MCF 10A (cell line): ENCODE measurements at regions of chr19 and their contacts with region 1.

Region 1: DNA sequence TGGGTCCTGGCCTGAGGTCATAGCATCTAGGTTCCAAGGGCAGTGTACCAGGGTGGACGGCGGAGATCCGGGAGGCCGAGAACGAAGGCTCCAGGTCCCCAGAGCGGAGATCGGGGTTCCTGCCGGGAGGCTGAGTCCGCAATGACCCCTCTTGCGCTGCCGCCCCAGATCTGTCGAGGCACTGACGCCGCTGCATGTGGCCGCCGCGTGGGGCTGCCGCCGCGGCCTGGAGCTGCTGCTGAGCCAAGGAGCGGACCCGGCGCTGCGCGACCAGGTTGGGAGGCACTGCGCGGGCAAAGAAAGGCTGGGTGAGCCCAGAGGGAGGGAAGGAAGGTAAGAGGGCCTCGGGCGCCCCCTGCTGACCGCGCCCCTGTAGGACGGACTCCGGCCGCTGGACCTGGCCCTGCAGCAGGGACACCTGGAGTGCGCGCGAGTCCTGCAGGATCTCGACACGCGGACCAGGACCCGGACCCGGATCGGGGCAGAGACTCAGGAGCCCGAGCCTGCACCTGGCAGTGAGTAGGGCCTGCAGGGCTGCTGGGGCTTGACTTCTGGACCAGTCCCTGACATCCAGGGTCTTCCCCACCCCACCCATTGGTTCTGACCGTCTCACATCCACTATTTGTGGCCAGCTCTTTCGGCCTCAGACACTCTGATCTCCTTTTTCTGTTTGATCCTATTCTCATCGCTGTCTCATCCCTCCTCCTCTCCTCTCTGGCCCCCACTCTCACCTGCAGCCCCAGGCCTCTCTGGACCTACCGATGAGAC is 971 bp downstream of the ANKLE1 start:
- DNase-seq: peak; percentile 88
- H3K4me3 Mint-ChIP-seq: peak overlapping the region; percentile 61
- H3K27ac Mint-ChIP-seq: no peak overlapping the region
- H3K4me1 Mint-ChIP-seq: no peaks in the 10 kb centered on the region
- H3K27me3 Mint-ChIP-seq: no peaks in the 10 kb centered on the region
- CTCF ChIP-seq: peak; percentile 88

Region 2: DNA sequence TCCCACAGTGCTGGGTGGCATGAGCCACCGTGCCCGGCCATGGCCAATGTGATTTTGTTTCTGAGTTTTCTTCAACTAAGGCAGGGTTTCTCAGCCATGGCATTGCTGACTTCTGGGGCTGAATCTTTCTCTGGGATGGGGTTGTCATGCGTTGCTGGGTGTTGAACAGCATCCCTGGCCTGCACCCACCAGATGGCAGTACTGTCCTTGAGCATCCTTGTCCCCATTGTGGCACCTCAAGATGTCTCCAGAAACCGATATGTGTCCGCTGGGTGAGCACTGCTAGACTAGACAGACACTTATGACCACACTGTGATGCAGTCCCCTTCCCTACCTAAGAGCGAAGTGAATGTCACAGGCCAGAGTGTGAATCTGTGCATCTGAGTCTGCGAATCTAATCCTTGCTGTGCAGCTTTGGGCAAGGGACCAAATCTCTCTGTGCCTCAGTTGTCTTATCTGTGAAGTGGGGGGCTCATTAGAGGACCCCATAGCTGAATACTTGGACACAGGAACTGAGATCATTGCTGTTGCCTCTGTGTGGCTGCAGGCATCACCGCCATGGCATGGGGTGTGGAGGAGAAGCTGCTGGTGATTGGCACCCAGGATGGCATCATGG is 503.8 kb before region 1 on chr19:
- CTCF ChIA-PET with region 1: no interaction called
- POLR2A ChIA-PET with region 1: no interaction called
- intact Hi-C with region 1: loop called (anchors 5 kb)
- DNase-seq: peak; percentile 78
- H3K4me3 Mint-ChIP-seq: no peak overlapping the region
- H3K27ac Mint-ChIP-seq: no peak overlapping the region
- H3K4me1 Mint-ChIP-seq: no peaks in the 10 kb centered on the region
- H3K27me3 Mint-ChIP-seq: no peaks in the 10 kb centered on the region
- CTCF ChIP-seq: peak; percentile 70

Region 3: GRCh38 chr19:16988661-16989060 is 294.0 kb before region 1 on chr19:
- CTCF ChIA-PET with region 1: no interaction called
- POLR2A ChIA-PET with region 1: no interaction called
- intact Hi-C with region 1: no loop called
- DNase-seq: no peak
- H3K4me3 Mint-ChIP-seq: no peak overlapping the region
- H3K27ac Mint-ChIP-seq: no peak overlapping the region
- H3K4me1 Mint-ChIP-seq: no peaks in the 10 kb centered on the region
- H3K27me3 Mint-ChIP-seq: peaks cover 21% of the 10 kb centered on the region
- CTCF ChIP-seq: no peak

Region 4: GRCh38 chr19:17069218-17069617 is 213.5 kb before region 1 on chr19:
- CTCF ChIA-PET with region 1: interaction called, 9 read pairs
- POLR2A ChIA-PET with region 1: interaction called, 3 read pairs
- intact Hi-C with region 1: loop called (anchors 1 kb)
- DNase-seq: no peak
- H3K4me3 Mint-ChIP-seq: no peak overlapping the region
- H3K27ac Mint-ChIP-seq: no peak overlapping the region
- H3K4me1 Mint-ChIP-seq: peaks cover 10% of the 10 kb centered on the region
- H3K27me3 Mint-ChIP-seq: no peaks in the 10 kb centered on the region
- CTCF ChIP-seq: no peak

Region 5: DNA sequence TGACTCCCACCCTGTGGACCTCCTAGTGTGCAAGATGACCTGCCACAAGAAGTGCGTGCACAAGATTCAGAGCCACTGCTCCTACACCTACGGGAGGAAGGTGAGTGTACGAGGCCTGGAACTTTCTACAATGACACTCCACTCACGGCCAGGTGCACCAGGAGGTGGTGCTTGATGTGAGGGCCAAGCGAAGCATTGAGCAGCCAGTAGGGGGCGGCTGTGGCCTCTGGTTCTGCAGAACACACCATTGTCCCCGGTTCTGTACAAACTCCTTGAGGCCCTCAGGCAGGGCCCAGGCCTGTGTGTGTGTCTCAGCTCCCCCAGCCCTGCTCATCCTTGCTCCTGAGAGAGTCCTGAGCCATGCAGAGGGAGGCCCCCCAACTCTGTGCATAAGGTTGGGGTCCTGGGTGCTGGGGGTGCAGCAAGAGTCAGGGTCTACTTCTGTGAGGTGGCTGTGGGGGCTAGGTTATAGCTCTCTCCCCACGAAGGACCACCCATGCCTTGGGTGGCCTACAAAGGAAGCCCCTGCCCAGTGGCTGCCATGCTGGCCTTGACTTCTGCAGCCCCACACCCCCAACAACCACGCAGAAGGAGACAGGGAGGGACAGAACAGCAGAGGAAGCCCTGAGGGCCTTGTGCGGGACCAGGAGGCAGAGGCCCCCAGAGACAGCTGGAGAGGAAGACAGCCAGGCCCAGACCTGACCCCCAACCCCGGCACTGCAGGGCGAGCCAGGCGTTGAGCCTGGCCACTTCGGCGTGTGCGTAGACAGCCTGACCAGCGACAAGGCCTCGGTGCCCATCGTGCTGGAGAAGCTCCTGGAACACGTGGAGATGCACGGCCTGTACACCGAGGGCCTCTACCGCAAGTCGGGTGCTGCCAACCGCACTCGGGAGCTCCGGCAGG is 77.2 kb before region 1 on chr19:
- CTCF ChIA-PET with region 1: interaction called, 4 read pairs
- POLR2A ChIA-PET with region 1: no interaction called
- intact Hi-C with region 1: loop called (anchors 1 kb)
- DNase-seq: peak; percentile 71
- H3K4me3 Mint-ChIP-seq: no peak overlapping the region
- H3K27ac Mint-ChIP-seq: no peak overlapping the region
- H3K4me1 Mint-ChIP-seq: peaks cover 4% of the 10 kb centered on the region
- H3K27me3 Mint-ChIP-seq: no peaks in the 10 kb centered on the region
- CTCF ChIP-seq: peak; percentile 55

Region 6: GRCh38 chr19:17260842-17261325 is 21.8 kb before region 1 on chr19:
- CTCF ChIA-PET with region 1: interaction called, 44 read pairs
- POLR2A ChIA-PET with region 1: no interaction called
- intact Hi-C with region 1: no loop called
- DNase-seq: peak; percentile 93
- H3K4me3 Mint-ChIP-seq: no peak overlapping the region
- H3K27ac Mint-ChIP-seq: no peak overlapping the region
- H3K4me1 Mint-ChIP-seq: peaks cover 6% of the 10 kb centered on the region
- H3K27me3 Mint-ChIP-seq: no peaks in the 10 kb centered on the region
- CTCF ChIP-seq: peak; percentile 91

Region 7: GRCh38 chr19:17266975-17267788 is 15.5 kb before region 1 on chr19 and contains the start of gene BABAM1:
- CTCF ChIA-PET with region 1: interaction called, 44 read pairs
- POLR2A ChIA-PET with region 1: interaction called, 13 read pairs
- intact Hi-C with region 1: no loop called
- DNase-seq: peak; percentile 99
- H3K4me3 Mint-ChIP-seq: peak within 1 kb of the TSS; percentile 84
- H3K27ac Mint-ChIP-seq: peak within 1 kb of the TSS; percentile 93
- H3K4me1 Mint-ChIP-seq: peaks cover 6% of the 10 kb centered on the region
- H3K27me3 Mint-ChIP-seq: no peaks in the 10 kb centered on the region
- CTCF ChIP-seq: no peak
- total RNA-seq, gene BABAM1: 96.1 and 104 TPM in 2 replicates

Region 8: GRCh38 chr19:17325897-17326598 is 43.4 kb after region 1 on chr19:
- CTCF ChIA-PET with region 1: no interaction called
- POLR2A ChIA-PET with region 1: no interaction called
- intact Hi-C with region 1: no loop called
- DNase-seq: peak; percentile 80
- H3K4me3 Mint-ChIP-seq: no peak overlapping the region
- H3K27ac Mint-ChIP-seq: no peak overlapping the region
- H3K4me1 Mint-ChIP-seq: peaks cover 5% of the 10 kb centered on the region
- H3K27me3 Mint-ChIP-seq: no peaks in the 10 kb centered on the region
- CTCF ChIP-seq: no peak

Region 9: GRCh38 chr19:17358395-17358794 is 75.7 kb after region 1 on chr19:
- CTCF ChIA-PET with region 1: no interaction called
- POLR2A ChIA-PET with region 1: no interaction called
- intact Hi-C with region 1: no loop called
- DNase-seq: peak; percentile 93
- H3K4me3 Mint-ChIP-seq: no peak overlapping the region
- H3K27ac Mint-ChIP-seq: peak overlapping the region; percentile 43
- H3K4me1 Mint-ChIP-seq: peaks cover 18% of the 10 kb centered on the region
- H3K27me3 Mint-ChIP-seq: no peaks in the 10 kb centered on the region
- CTCF ChIP-seq: no peak

Region 10: DNA sequence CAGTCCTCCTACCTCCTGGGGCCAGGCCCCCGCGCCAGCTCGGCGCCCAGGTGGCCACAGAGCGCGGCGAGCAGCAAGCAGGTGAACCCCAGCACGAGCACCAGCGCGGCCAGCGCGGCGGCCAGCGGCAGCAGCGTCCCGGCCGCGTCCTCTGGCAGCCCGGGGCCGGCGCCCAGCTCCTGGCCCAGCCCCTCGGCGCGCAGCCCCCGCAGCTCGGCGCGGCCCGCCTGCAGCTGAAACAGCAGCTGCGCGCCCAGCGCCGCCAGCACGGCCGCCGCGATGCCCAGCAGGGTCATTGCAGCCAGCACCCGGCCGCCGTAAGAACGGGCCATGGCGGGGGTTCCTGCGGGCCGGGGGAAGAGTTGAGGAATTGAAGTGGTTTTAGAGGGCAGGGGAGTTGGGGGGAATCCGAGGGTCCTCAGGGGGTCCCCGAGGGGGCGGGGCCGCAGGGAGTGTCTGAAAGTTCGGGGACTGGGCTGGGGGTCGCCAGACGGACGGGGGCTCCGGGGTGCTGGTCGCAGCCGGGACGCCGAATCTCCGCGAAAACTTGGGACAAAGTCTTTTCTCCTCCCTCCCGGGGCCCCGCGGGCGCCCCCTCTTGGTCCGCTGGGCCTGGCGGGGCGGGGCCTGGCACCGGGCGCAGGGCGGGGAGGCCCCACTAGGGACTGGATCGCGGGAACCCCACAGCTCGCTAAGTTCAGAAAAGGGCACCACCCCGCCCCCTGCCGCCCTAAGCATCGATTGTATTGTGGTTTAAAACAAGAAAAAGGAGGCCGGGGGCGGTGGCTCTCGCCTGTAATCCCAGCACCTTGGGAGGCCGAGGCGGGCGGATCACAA is 165.7 kb after region 1 on chr19 and contains the start of gene TMEM221:
- CTCF ChIA-PET with region 1: no interaction called
- POLR2A ChIA-PET with region 1: no interaction called
- intact Hi-C with region 1: no loop called
- DNase-seq: no peak
- H3K4me3 Mint-ChIP-seq: no peak within 1 kb of the TSS
- H3K27ac Mint-ChIP-seq: no peak within 1 kb of the TSS
- H3K4me1 Mint-ChIP-seq: peaks cover 5% of the 10 kb centered on the region
- H3K27me3 Mint-ChIP-seq: no peaks in the 10 kb centered on the region
- CTCF ChIP-seq: peak; percentile 14
- total RNA-seq, gene TMEM221: not detected in 2 replicates